ENCODE measurements at regions of chr4 and their contacts with region 1.

Region 1: GRCh38 chr4:143025081-143025704 is 159.5 kb upstream of the USP38 start:
- DNase-seq: no peak
- H3K4me3 ChIP-seq: no peak overlapping the region
- H3K27ac ChIP-seq: no peak overlapping the region
- H3K4me1 ChIP-seq: peaks cover 0 to 5% (median 2%) of the 10 kb centered on the region in 4 donors
- H3K27me3 ChIP-seq: no peaks in the 10 kb centered on the region
- CTCF ChIP-seq: peak; percentile 12 to 43 (median 38)
- EP300 ChIP-seq: no peak
- POLR2A ChIP-seq: no peak

Region 2: GRCh38 chr4:142353149-142353738 is 671.9 kb before region 1 on chr4:
- intact Hi-C with region 1: loop called (anchors 5 kb)
- DNase-seq: no peak
- H3K4me3 ChIP-seq: no peak overlapping the region
- H3K27ac ChIP-seq: peak overlapping the region in 2 of 4 donors; percentile 3 to 27
- H3K4me1 ChIP-seq: peaks cover 0 to 33% (median 18%) of the 10 kb centered on the region in 4 donors
- H3K27me3 ChIP-seq: no peaks in the 10 kb centered on the region
- CTCF ChIP-seq: peak; percentile 8 to 90 (median 65)
- EP300 ChIP-seq: no peak
- POLR2A ChIP-seq: no peak

Region 3: DNA sequence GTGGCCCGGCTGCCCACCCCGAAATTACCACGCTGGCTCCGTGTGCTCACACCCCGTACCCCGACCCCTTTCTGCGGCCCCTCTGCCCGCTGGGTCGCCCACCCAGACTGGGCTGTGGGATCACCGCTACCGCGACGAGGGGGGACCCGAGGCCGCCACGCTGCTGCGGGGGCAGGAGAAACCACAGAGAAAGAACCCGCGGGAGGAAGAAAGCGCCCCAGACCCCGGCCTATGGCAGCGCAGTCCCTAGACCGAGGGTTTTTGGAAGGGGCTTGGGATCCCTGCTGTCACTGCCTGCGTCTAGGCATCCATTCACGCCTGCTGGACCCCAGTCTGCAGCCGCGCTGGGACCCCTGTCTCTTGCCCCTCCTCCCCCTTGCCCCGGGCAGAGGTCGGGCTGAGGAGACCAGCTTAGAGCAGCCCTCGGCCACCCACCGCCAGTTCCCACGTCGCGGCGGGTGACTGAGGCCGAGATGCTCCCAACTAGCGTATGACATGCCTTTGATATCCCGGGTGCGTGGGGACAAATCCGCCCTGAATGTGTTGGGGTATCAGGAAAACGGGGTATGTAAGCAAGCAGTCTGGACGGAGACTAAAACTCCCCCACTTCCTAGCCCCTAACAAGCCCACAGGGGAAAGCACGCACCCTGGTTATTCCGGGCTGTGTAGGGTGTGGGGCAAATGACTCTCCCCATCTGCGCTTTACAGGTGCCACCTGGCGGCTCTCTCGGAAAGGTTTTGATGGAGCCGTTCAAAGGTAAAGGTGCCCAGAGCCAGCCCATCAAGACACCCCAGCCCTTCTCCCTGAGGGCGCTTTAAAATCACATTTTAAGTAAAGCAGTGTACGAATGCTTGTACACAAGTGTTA is 178.2 kb before region 1 on chr4:
- intact Hi-C with region 1: loop called (anchors 5 kb)
- DNase-seq: no peak
- H3K4me3 ChIP-seq: peak overlapping the region; percentile 67 to 80 (median 75)
- H3K27ac ChIP-seq: peak overlapping the region; percentile 72 to 82 (median 78)
- H3K4me1 ChIP-seq: peaks cover 0 to 29% (median 9%) of the 10 kb centered on the region in 4 donors
- H3K27me3 ChIP-seq: peaks cover 0 to 11% (median 0%) of the 10 kb centered on the region in 3 donors
- CTCF ChIP-seq: no peak
- EP300 ChIP-seq: no peak
- POLR2A ChIP-seq: no peak

Region 4: GRCh38 chr4:142883040-142883832 is 142.0 kb before region 1 on chr4:
- intact Hi-C with region 1: loop called (anchors 5 kb)
- DNase-seq: no peak
- H3K4me3 ChIP-seq: no peak overlapping the region
- H3K27ac ChIP-seq: no peak overlapping the region
- H3K4me1 ChIP-seq: no peaks in the 10 kb centered on the region
- H3K27me3 ChIP-seq: no peaks in the 10 kb centered on the region
- CTCF ChIP-seq: peak in 3 of 4 experiments; percentile 33 to 47 (median 35)
- EP300 ChIP-seq: no peak
- POLR2A ChIP-seq: no peak

Region 5: DNA sequence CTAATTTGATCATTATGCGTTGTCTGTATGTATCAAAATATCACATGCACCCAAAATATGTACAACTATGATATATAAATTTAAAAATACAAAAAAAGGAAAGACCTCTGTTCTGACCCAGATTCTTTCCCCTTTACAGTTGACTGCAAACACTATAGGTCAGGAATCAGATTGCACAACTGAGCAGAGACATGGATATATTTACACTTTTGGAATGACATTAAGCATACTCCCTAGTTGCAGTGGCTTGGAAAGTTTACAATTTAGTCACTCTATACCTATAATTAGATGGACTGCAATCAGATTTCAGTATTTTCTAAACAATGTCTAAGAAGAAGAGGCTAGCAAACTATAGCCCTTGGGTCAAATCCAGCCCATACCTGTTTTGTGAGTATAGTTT is 80.6 kb before region 1 on chr4:
- intact Hi-C with region 1: no loop called
- DNase-seq: no peak
- H3K4me3 ChIP-seq: no peak overlapping the region
- H3K27ac ChIP-seq: no peak overlapping the region
- H3K4me1 ChIP-seq: peaks cover 0 to 15% (median 0%) of the 10 kb centered on the region in 4 donors
- H3K27me3 ChIP-seq: no peaks in the 10 kb centered on the region
- CTCF ChIP-seq: no peak
- EP300 ChIP-seq: no peak
- POLR2A ChIP-seq: no peak